ENCODE measurements at regions of chr17 and their contacts with region 1.

Region 1: GRCh38 chr17:77404812-77405581 is 264.2 kb downstream of the SEC14L1 start:
- DNase-seq: peak; percentile 95
- H3K4me3 Mint-ChIP-seq: peak overlapping the region; percentile 95
- H3K27ac Mint-ChIP-seq: peak overlapping the region; percentile 90
- H3K4me1 Mint-ChIP-seq: peaks cover 85% of the 10 kb centered on the region
- H3K27me3 Mint-ChIP-seq: no peaks in the 10 kb centered on the region

Region 2: GRCh38 chr17:77345260-77345910 is 59.6 kb before region 1 on chr17:
- intact Hi-C with region 1: no loop called
- DNase-seq: no peak
- H3K4me3 Mint-ChIP-seq: no peak overlapping the region
- H3K27ac Mint-ChIP-seq: no peak overlapping the region
- H3K4me1 Mint-ChIP-seq: peaks cover 36% of the 10 kb centered on the region
- H3K27me3 Mint-ChIP-seq: no peaks in the 10 kb centered on the region

Region 3: DNA sequence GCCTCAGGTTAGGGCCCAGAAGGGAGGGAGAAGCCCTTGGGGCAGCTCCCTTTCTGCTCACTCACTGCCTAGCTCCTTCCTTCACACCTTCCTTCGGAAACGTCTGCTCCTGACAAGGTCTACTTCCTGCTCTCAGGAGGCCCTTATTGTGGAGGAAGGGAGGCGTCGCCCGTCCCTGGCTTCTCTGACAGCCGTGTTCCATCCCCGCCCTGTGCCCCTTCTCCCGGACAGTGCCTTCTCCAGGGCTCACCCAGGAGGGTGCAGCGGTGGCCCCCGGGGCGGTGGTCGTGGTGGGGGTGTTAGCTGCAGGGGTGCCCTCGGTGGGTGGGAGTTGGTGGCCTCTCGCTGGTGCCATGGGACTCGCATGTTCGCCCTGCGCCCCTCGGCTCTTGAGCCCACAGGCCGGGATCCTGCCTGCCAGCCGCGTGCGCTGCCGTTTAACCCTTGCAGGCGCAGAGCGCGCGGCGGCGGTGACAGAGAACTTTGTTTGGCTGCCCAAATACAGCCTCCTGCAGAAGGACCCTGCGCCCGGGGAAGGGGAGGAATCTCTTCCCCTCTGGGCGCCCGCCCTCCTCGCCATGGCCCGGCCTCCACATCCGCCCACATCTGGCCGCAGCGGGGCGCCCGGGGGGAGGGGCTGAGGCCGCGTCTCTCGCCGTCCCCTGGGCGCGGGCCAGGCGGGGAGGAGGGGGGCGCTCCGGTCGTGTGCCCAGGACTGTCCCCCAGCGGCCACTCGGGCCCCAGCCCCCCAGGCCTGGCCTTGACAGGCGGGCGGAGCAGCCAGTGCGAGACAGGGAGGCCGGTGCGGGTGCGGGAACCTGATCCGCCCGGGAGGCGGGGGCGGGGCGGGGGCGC is 32.3 kb before region 1 on chr17:
- intact Hi-C with region 1: loop called (anchors 5 kb)
- DNase-seq: peak; percentile 95
- H3K4me3 Mint-ChIP-seq: peak overlapping the region; percentile 81
- H3K27ac Mint-ChIP-seq: peak overlapping the region; percentile 84
- H3K4me1 Mint-ChIP-seq: peaks cover 57% of the 10 kb centered on the region
- H3K27me3 Mint-ChIP-seq: no peaks in the 10 kb centered on the region

Region 4: DNA sequence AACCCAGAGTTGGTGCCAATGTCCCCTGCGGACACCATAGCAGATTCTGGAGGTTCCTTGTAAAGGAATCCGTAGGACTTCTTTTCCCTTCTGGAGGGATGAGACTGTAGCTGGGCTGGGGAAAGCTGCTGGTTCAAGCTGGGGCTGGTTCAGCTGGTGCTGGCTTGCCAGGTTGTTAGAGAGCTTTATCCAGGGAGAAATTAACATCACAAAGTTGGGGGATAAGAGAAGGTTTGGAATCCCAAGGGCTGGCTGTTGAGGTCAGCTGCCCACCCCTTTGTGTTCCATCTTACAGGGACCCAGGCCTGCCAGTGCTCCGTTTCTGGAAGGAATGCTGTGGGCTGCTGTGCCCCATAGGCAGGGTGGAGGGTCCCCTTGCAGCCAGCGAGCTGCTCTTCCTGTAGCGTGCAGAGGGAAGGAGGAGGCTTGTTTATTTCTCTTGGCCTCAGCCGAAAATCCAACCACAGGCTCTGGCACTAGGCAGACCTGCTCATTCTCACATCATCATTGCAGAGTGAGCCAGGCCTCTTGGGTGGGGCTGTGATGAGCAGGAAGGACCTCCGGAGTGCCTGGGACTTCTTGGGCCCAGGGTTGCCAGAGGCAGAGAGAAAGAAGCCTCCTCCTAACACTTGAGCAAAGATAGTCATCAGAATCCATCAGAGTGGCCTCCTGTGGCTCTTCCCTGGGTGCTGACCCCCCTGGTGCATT is 13.2 kb before region 1 on chr17:
- intact Hi-C with region 1: loop called (anchors 1 kb)
- DNase-seq: peak; percentile 88
- H3K4me3 Mint-ChIP-seq: peak overlapping the region; percentile 87
- H3K27ac Mint-ChIP-seq: peak overlapping the region; percentile 90
- H3K4me1 Mint-ChIP-seq: peaks cover 74% of the 10 kb centered on the region
- H3K27me3 Mint-ChIP-seq: no peaks in the 10 kb centered on the region

Region 5: DNA sequence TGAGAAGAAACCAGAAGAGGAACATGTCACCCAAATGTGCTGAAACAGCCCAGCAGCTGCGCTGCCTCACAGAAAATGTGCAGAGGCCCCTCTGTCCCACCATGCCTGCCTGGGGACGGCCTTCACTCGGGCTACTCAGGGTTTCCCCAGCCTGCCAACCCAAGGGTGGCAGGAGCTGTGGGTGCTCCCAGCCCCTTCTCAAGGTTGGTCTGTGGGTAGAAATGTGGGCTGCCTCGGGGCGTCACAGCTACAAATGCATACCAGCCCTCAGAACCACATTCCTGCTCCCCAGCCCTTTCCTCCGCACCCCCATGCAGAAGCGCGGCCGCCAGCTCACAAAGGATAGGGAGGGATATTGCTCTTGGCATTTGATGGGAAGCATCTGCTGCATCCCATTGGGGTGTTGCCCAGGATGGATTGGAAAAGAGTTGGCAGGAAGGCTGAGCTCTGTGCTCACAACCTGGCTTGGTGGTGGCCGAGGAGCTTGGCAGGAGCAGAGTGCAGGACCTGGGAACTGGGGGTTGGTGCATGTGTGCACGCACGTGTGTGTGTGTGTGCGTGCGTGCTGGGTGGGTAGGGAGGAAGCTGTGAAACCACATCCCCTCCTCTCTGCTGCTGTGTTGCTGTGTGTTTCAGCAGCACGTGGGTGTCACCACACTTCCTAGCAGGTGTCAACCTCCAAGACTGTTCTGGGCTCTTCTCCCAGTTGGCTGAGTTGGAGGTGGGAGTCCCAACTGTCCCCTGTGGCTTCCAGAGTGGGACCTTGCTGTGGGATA is 40.2 kb after region 1 on chr17:
- intact Hi-C with region 1: loop called (anchors 2 kb)
- DNase-seq: peak; percentile 95
- H3K4me3 Mint-ChIP-seq: peak overlapping the region; percentile 81
- H3K27ac Mint-ChIP-seq: peak overlapping the region; percentile 92
- H3K4me1 Mint-ChIP-seq: peaks cover 84% of the 10 kb centered on the region
- H3K27me3 Mint-ChIP-seq: no peaks in the 10 kb centered on the region

Region 6: DNA sequence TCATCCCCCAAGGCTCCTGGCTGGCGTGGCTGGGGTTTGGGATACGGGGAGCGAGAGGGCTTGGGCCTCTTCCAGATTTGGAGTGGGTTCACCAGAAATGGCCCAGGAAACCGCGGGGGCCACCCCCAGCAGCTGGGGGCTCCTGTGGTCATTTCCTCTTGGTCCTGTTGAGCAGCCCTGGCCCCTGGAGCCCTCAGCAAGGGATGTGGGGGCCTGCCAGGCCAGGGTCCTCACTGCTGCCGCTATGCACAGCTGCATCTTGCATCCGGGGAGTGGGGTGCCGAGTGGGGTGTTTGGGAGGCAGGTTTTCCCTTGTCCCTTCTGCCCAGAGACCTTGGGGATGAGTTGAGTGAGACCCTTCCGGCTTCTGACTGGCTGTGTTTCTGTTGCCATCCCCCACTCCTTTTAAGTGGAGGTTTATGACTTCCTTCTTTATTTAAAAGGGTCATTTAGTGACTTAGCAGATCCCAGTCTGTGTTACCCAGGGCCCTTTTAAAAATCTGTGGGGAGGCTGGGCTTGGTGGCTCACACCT is 55.6 kb after region 1 on chr17:
- intact Hi-C with region 1: no loop called
- DNase-seq: peak; percentile 74
- H3K4me3 Mint-ChIP-seq: peak overlapping the region; percentile 97
- H3K27ac Mint-ChIP-seq: peak overlapping the region; percentile 96
- H3K4me1 Mint-ChIP-seq: peaks cover 67% of the 10 kb centered on the region
- H3K27me3 Mint-ChIP-seq: no peaks in the 10 kb centered on the region

Region 7: DNA sequence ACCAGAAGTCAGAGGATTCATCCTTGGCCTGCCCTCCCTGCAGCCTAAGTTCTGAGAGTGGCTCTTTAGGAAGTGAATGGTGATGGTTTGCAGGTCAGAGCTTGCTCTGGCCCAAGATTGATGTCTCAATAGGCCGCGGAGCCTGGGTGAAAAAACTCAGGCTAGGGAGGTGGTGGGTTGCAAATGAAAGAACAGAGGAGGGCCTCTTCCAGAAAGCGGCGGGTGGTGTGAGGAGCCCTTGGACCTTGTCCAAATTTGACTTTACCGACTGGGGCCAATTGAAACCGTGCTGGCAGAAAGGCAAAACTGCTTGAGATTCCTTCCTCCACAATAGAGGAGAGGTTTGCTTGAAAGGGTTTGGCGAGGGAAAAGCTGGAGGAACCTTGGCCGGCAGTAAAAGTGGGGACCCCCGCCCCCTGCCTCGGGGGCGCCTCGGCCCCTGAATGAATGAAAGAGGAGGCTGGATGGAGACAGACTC is 67.0 kb after region 1 on chr17:
- intact Hi-C with region 1: loop called (anchors 2 kb)
- DNase-seq: no peak
- H3K4me3 Mint-ChIP-seq: peak overlapping the region; percentile 60
- H3K27ac Mint-ChIP-seq: peak overlapping the region; percentile 83
- H3K4me1 Mint-ChIP-seq: peaks cover 83% of the 10 kb centered on the region
- H3K27me3 Mint-ChIP-seq: no peaks in the 10 kb centered on the region

Region 8: GRCh38 chr17:77494664-77495435 is 89.9 kb after region 1 on chr17:
- intact Hi-C with region 1: loop called (anchors 1 kb)
- DNase-seq: peak; percentile 91
- H3K4me3 Mint-ChIP-seq: no peak overlapping the region
- H3K27ac Mint-ChIP-seq: peak overlapping the region; percentile 76
- H3K4me1 Mint-ChIP-seq: peaks cover 20% of the 10 kb centered on the region
- H3K27me3 Mint-ChIP-seq: no peaks in the 10 kb centered on the region